ENCODE measurements at regions of chr10 and their contacts with region 1.

Region 1: DNA sequence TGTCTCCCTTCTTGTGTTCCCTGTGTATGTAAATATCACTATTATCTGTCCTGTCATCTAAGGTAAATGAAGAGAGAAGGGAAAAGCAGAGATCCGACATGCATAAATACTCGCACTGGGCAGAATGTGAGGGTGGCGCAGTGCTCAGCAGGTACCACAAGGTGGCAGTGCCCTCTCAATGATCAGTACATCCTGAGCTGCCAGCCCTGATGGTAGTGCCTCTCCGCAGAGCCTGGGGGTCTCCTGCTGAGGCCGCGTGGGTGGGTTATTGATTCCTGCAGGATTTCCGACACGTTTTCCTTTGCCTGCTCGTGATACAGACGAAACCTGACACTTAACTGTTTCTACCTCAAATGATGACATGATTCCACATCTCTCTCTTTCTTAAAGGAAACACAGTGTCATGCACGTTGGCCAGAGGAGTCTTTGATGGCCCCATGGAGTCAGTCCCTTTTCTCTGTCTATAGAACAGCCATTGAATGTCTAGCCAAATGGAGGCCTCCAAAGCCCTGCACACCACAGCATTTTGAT is 19.8 kb downstream of the RGR start:
- DNase-seq: peak; percentile 31 to 87
- H3K4me3 ChIP-seq: no peak overlapping the region
- H3K27ac ChIP-seq: no peak overlapping the region
- H3K4me1 ChIP-seq: no peaks in the 10 kb centered on the region
- H3K27me3 ChIP-seq: no peaks in the 10 kb centered on the region
- CTCF ChIP-seq: peak; percentile 89 to 99 (median 97)
- EP300 ChIP-seq: no peak
- POLR2A ChIP-seq: no peak
- RAD21 ChIP-seq: peak; percentile 98 to 99

Region 2: GRCh38 chr10:84244651-84245270 is 19.9 kb before region 1 on chr10 and contains the start of gene RGR:
- CTCF ChIA-PET with region 1: interaction called, 13 read pairs
- POLR2A ChIA-PET with region 1: no interaction called
- DNase-seq: no peak
- H3K4me3 ChIP-seq: no peak within 1 kb of the TSS
- H3K27ac ChIP-seq: no peak within 1 kb of the TSS
- H3K4me1 ChIP-seq: no peaks in the 10 kb centered on the region
- H3K27me3 ChIP-seq: no peaks in the 10 kb centered on the region
- CTCF ChIP-seq: no peak
- EP300 ChIP-seq: no peak
- POLR2A ChIP-seq: no peak
- RAD21 ChIP-seq: no peak
- total RNA-seq, gene RGR: not detected in 2 replicates

Region 3: GRCh38 chr10:84328418-84329195 is 63.9 kb after region 1 on chr10 and contains the start of gene CCSER2:
- CTCF ChIA-PET with region 1: interaction called, 12 read pairs
- POLR2A ChIA-PET with region 1: interaction called, 3 read pairs
- DNase-seq: peak; percentile 77 to 99
- H3K4me3 ChIP-seq: peak within 1 kb of the TSS; percentile 61 to 83 (median 78)
- H3K27ac ChIP-seq: peak within 1 kb of the TSS; percentile 78
- H3K4me1 ChIP-seq: peaks cover 3 to 6% (median 3%) of the 10 kb centered on the region in 4 experiments; a peak in 6 of 7 replicates
- H3K27me3 ChIP-seq: no peaks in the 10 kb centered on the region
- CTCF ChIP-seq: peak in 1 of 3 experiments; percentile 7; a peak in 1 of 4 replicates
- EP300 ChIP-seq: no peak
- POLR2A ChIP-seq: peak in 1 of 2 experiments; percentile 73; a peak in 2 of 3 replicates
- RAD21 ChIP-seq: no peak
- total RNA-seq, gene CCSER2: 30.5 and 32.4 TPM in 2 replicates

Region 4: GRCh38 chr10:84352251-84352842 is 87.7 kb after region 1 on chr10:
- CTCF ChIA-PET with region 1: interaction called, 18 read pairs
- POLR2A ChIA-PET with region 1: no interaction called
- DNase-seq: peak in 1 of 2 experiments; percentile 74
- H3K4me3 ChIP-seq: no peak overlapping the region
- H3K27ac ChIP-seq: no peak overlapping the region
- H3K4me1 ChIP-seq: peaks cover 0 to 8% (median 3%) of the 10 kb centered on the region in 4 experiments; a peak in 4 of 7 replicates
- H3K27me3 ChIP-seq: no peaks in the 10 kb centered on the region
- CTCF ChIP-seq: peak; percentile 73 to 92 (median 88)
- EP300 ChIP-seq: no peak
- POLR2A ChIP-seq: no peak
- RAD21 ChIP-seq: peak; percentile 73 to 83

Region 5: DNA sequence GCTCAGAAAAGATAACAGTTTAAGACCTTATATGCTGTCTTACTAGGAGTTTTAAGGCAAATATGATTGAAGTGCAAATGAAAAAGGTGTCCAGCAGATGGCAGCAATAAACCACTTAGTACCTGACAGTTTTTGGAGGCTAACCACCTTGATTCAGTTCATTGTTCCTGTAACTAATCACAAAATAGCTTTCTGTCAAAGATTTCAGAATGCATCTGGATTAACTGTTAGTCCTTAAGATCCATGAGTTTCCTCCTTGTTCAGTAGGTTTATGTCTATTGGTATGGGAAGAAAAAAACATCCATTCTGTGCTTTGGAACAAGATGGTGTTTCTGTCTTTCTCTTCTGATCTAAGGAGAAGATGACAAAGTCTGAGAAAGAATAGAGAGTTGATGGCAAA is 110.3 kb after region 1 on chr10:
- CTCF ChIA-PET with region 1: interaction called, 27 read pairs
- POLR2A ChIA-PET with region 1: no interaction called
- DNase-seq: no peak
- H3K4me3 ChIP-seq: no peak overlapping the region
- H3K27ac ChIP-seq: no peak overlapping the region
- H3K4me1 ChIP-seq: no peaks in the 10 kb centered on the region
- H3K27me3 ChIP-seq: no peaks in the 10 kb centered on the region
- CTCF ChIP-seq: peak in 2 of 3 experiments; percentile 56 to 68; a peak in 3 of 4 replicates
- EP300 ChIP-seq: no peak
- POLR2A ChIP-seq: no peak
- RAD21 ChIP-seq: peak; percentile 83 to 84

Region 6: GRCh38 chr10:84574102-84574501 is 309.4 kb after region 1 on chr10:
- CTCF ChIA-PET with region 1: no interaction called
- POLR2A ChIA-PET with region 1: no interaction called
- DNase-seq: no peak
- H3K4me3 ChIP-seq: no peak overlapping the region
- H3K27ac ChIP-seq: no peak overlapping the region
- H3K4me1 ChIP-seq: no peaks in the 10 kb centered on the region; a peak in 1 of 7 replicates
- H3K27me3 ChIP-seq: no peaks in the 10 kb centered on the region
- CTCF ChIP-seq: peak in 2 of 3 experiments; percentile 49 to 60; a peak in 3 of 4 replicates
- EP300 ChIP-seq: no peak
- POLR2A ChIP-seq: no peak
- RAD21 ChIP-seq: peak; percentile 38 to 46

Measured in H1 (cell line).